CD8-positive, alpha-beta memory T cell (primary cell): ENCODE measurements at regions of chr1 and their contacts with region 1.

Region 1: GRCh38 chr1:24847995-24848881 is 81.8 kb downstream of the RUNX3 start:
- DNase-seq: peak; percentile 82 to 95 (median 86)
- H3K4me3 ChIP-seq: peak overlapping the region; percentile 48
- H3K4me3 Mint-ChIP-seq: peak overlapping the region; percentile 66 to 84 (median 74)
- H3K27ac ChIP-seq: peak overlapping the region; percentile 27
- H3K27ac Mint-ChIP-seq: peak overlapping the region; percentile 73 to 95 (median 82)
- H3K4me1 ChIP-seq: peaks cover 4% of the 10 kb centered on the region
- H3K4me1 Mint-ChIP-seq: peaks cover 24 to 37% (median 25%) of the 10 kb centered on the region in 3 donors
- H3K27me3 ChIP-seq: no peaks in the 10 kb centered on the region
- H3K27me3 Mint-ChIP-seq: peaks cover 0 to 1% of the 10 kb centered on the region in 2 donors

Region 2: GRCh38 chr1:24830680-24831272 is 17.5 kb before region 1 on chr1:
- CTCF ChIA-PET with region 1: interaction called, 7 read pairs
- POLR2A ChIA-PET with region 1: interaction called, 11 read pairs
- DNase-seq: peak in 2 of 5 donors; percentile 44 to 47
- H3K4me3 ChIP-seq: no peak overlapping the region
- H3K4me3 Mint-ChIP-seq: no peak overlapping the region
- H3K27ac ChIP-seq: no peak overlapping the region
- H3K27ac Mint-ChIP-seq: no peak overlapping the region
- H3K4me1 ChIP-seq: no peaks in the 10 kb centered on the region
- H3K4me1 Mint-ChIP-seq: no peaks in the 10 kb centered on the region
- H3K27me3 ChIP-seq: no peaks in the 10 kb centered on the region
- H3K27me3 Mint-ChIP-seq: peaks cover 0 to 35% of the 10 kb centered on the region in 2 donors

Region 3: GRCh38 chr1:24909388-24909898 is 61.2 kb after region 1 on chr1:
- CTCF ChIA-PET with region 1: interaction called, 29 read pairs
- POLR2A ChIA-PET with region 1: interaction called, 4 read pairs
- DNase-seq: no peak
- H3K4me3 ChIP-seq: no peak overlapping the region
- H3K4me3 Mint-ChIP-seq: peak overlapping the region; percentile 11 to 79 (median 53)
- H3K27ac ChIP-seq: peak overlapping the region; percentile 94
- H3K27ac Mint-ChIP-seq: peak overlapping the region; percentile 97 to 100 (median 100)
- H3K4me1 ChIP-seq: peaks cover 96% of the 10 kb centered on the region
- H3K4me1 Mint-ChIP-seq: peaks cover 66 to 96% (median 75%) of the 10 kb centered on the region in 3 donors
- H3K27me3 ChIP-seq: no peaks in the 10 kb centered on the region
- H3K27me3 Mint-ChIP-seq: peaks cover 0 to 4% of the 10 kb centered on the region in 2 donors

Region 4: GRCh38 chr1:24930204-24931145 is 82.2 kb after region 1 on chr1 and contains the start of gene RUNX3:
- CTCF ChIA-PET with region 1: interaction called, 98 read pairs
- POLR2A ChIA-PET with region 1: interaction called, 8 read pairs
- DNase-seq: peak; percentile 91 to 96 (median 95)
- H3K4me3 ChIP-seq: peak within 1 kb of the TSS; percentile 77
- H3K4me3 Mint-ChIP-seq: peak within 1 kb of the TSS; percentile 87 to 99 (median 97)
- H3K27ac ChIP-seq: peak within 1 kb of the TSS; percentile 89
- H3K27ac Mint-ChIP-seq: peak within 1 kb of the TSS; percentile 85 to 100 (median 100)
- H3K4me1 ChIP-seq: peaks cover 51% of the 10 kb centered on the region
- H3K4me1 Mint-ChIP-seq: peaks cover 34 to 69% (median 54%) of the 10 kb centered on the region in 3 donors
- H3K27me3 ChIP-seq: no peaks in the 10 kb centered on the region
- H3K27me3 Mint-ChIP-seq: peaks cover 0 to 10% of the 10 kb centered on the region in 2 donors
- total RNA-seq, gene RUNX3: 218 to 241 TPM

Region 5: GRCh38 chr1:25148673-25149300 is 300.5 kb after region 1 on chr1:
- CTCF ChIA-PET with region 1: interaction called, 16 read pairs
- POLR2A ChIA-PET with region 1: no interaction called
- DNase-seq: peak; percentile 7 to 58 (median 38)
- H3K4me3 ChIP-seq: no peak overlapping the region
- H3K4me3 Mint-ChIP-seq: no peak overlapping the region
- H3K27ac ChIP-seq: no peak overlapping the region
- H3K27ac Mint-ChIP-seq: no peak overlapping the region
- H3K4me1 ChIP-seq: no peaks in the 10 kb centered on the region
- H3K4me1 Mint-ChIP-seq: peaks cover 6 to 8% (median 6%) of the 10 kb centered on the region in 3 donors
- H3K27me3 ChIP-seq: peaks cover 6% of the 10 kb centered on the region
- H3K27me3 Mint-ChIP-seq: peaks cover 17 to 53% of the 10 kb centered on the region in 2 donors

Region 6: DNA sequence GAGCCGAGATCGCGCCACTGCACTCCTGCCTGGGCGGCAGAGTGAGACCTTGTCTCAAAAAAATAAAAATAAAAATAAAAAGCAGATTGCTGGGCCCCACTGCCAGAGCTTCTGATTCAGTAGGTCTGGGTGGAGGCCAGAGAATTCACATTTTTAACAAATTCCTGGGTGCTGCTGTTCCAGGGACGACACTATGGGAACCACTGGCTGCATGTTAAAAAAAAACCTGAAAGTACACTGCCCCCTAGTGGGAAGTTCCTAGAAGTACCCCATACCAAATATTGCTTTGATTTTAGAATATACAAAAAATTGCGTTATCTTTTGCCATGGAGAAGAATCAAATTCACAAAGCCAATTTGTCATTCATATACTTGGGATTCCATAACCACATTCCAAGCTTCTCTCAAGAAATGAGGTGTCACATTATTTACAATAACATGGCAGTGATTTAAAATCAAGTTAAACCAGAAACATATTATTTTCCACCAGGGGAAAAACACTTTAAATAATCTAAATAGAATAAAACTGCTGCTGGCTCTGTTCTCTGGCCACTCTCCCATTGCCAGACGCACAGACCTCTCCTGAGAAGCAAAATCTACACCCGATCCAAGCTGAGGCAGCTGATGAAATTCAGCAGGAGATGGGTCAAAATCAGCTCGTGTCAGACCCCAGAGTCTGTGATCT is 356.7 kb after region 1 on chr1:
- CTCF ChIA-PET with region 1: interaction called, 54 read pairs
- POLR2A ChIA-PET with region 1: no interaction called
- DNase-seq: peak in 2 of 5 donors; percentile 46 to 60
- H3K4me3 ChIP-seq: no peak overlapping the region
- H3K4me3 Mint-ChIP-seq: no peak overlapping the region
- H3K27ac ChIP-seq: no peak overlapping the region
- H3K27ac Mint-ChIP-seq: no peak overlapping the region
- H3K4me1 ChIP-seq: no peaks in the 10 kb centered on the region
- H3K4me1 Mint-ChIP-seq: peaks cover 0 to 3% (median 0%) of the 10 kb centered on the region in 3 donors
- H3K27me3 ChIP-seq: peaks cover 4% of the 10 kb centered on the region
- H3K27me3 Mint-ChIP-seq: peaks cover 2 to 21% of the 10 kb centered on the region in 2 donors